ENCODE measurements at regions of chr12 and their contacts with region 1.

Region 1: GRCh38 chr12:120686690-120687577 is at the start of gene MLEC:
- DNase-seq: peak; percentile 99
- H3K4me3 Mint-ChIP-seq: peak within 1 kb of the TSS; percentile 90
- H3K27ac Mint-ChIP-seq: peak within 1 kb of the TSS; percentile 91
- H3K4me1 Mint-ChIP-seq: peaks cover 50% of the 10 kb centered on the region
- H3K27me3 Mint-ChIP-seq: no peaks in the 10 kb centered on the region
- total RNA-seq, gene MLEC: 92.9 to 93.7 TPM

Region 2: DNA sequence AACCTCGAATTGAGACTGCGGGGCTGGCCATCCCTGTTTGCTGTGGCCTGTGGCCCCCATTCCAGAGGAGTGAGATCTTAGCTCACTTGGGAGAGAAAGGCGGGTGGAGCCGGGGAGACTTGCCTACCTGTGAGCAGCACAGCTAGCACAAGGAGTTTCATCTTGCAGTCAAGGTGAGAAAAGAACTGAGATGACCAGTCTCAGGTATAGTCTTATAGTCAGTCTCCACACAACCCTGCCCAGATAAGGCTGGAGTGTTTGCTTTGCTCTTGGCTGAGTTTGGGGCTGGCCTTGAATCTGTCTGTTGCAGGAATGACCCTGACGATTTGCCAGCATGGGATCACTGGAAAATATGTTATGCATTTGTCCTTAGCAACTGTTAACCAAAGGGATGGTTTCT is 359.3 kb before region 1 on chr12 and contains the start of gene PLA2G1B:
- CTCF ChIA-PET with region 1: no interaction called
- POLR2A ChIA-PET with region 1: no interaction called
- intact Hi-C with region 1: loop called (anchors 2 kb)
- DNase-seq: no peak
- H3K4me3 Mint-ChIP-seq: no peak within 1 kb of the TSS
- H3K27ac Mint-ChIP-seq: no peak within 1 kb of the TSS
- H3K4me1 Mint-ChIP-seq: peaks cover 2% of the 10 kb centered on the region
- H3K27me3 Mint-ChIP-seq: peaks cover 2% of the 10 kb centered on the region
- total RNA-seq, gene PLA2G1B: not detected

Region 3: GRCh38 chr12:120361506-120362208 is 325.3 kb before region 1 on chr12:
- CTCF ChIA-PET with region 1: no interaction called
- POLR2A ChIA-PET with region 1: no interaction called
- intact Hi-C with region 1: no loop called
- DNase-seq: peak; percentile 18
- H3K4me3 Mint-ChIP-seq: no peak overlapping the region
- H3K27ac Mint-ChIP-seq: no peak overlapping the region
- H3K4me1 Mint-ChIP-seq: no peaks in the 10 kb centered on the region
- H3K27me3 Mint-ChIP-seq: peaks cover 60% of the 10 kb centered on the region

Region 4: DNA sequence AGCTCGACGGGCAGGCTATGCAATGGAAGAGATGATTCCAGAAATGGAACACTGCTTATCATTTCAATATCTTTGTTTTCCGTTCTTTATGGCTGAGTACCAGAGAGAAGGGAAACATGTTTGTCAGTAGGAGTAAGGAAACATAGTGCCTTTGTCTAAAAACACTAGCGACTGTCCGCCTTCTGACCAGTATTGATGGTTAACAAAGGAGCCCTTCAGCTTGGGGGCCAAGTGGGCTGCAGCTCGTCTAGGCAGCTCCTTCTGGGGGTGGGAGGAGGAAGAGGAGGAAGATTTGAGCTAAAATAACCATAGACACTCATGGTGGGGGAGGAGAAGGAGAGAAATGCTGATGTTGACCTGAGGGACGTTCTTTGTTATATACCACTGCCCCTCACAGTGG is 172.9 kb before region 1 on chr12:
- CTCF ChIA-PET with region 1: no interaction called
- POLR2A ChIA-PET with region 1: no interaction called
- intact Hi-C with region 1: no loop called
- DNase-seq: no peak
- H3K4me3 Mint-ChIP-seq: no peak overlapping the region
- H3K27ac Mint-ChIP-seq: no peak overlapping the region
- H3K4me1 Mint-ChIP-seq: no peaks in the 10 kb centered on the region
- H3K27me3 Mint-ChIP-seq: no peaks in the 10 kb centered on the region

Region 5: GRCh38 chr12:120580787-120581723 is 105.9 kb before region 1 on chr12 and contains the start of gene POP5:
- CTCF ChIA-PET with region 1: interaction called, 11 read pairs
- POLR2A ChIA-PET with region 1: interaction called, 4 read pairs
- intact Hi-C with region 1: loop called (anchors 1 kb)
- DNase-seq: peak; percentile 97
- H3K4me3 Mint-ChIP-seq: peak within 1 kb of the TSS; percentile 96
- H3K27ac Mint-ChIP-seq: peak within 1 kb of the TSS; percentile 86
- H3K4me1 Mint-ChIP-seq: peaks cover 33% of the 10 kb centered on the region
- H3K27me3 Mint-ChIP-seq: no peaks in the 10 kb centered on the region
- total RNA-seq, gene POP5: 54.1 to 55.7 TPM

Region 6: GRCh38 chr12:120610560-120610959 is 76.4 kb before region 1 on chr12:
- CTCF ChIA-PET with region 1: no interaction called
- POLR2A ChIA-PET with region 1: no interaction called
- intact Hi-C with region 1: no loop called
- DNase-seq: no peak
- H3K4me3 Mint-ChIP-seq: no peak overlapping the region
- H3K27ac Mint-ChIP-seq: no peak overlapping the region
- H3K4me1 Mint-ChIP-seq: peaks cover 13% of the 10 kb centered on the region
- H3K27me3 Mint-ChIP-seq: no peaks in the 10 kb centered on the region

Region 7: GRCh38 chr12:120725659-120726509 is 39.0 kb after region 1 on chr12 and contains the start of gene ACADS:
- CTCF ChIA-PET with region 1: no interaction called
- POLR2A ChIA-PET with region 1: no interaction called
- intact Hi-C with region 1: loop called (anchors 5 kb)
- DNase-seq: peak; percentile 91
- H3K4me3 Mint-ChIP-seq: peak within 1 kb of the TSS; percentile 87
- H3K27ac Mint-ChIP-seq: no peak within 1 kb of the TSS
- H3K4me1 Mint-ChIP-seq: peaks cover 17% of the 10 kb centered on the region
- H3K27me3 Mint-ChIP-seq: no peaks in the 10 kb centered on the region
- total RNA-seq, gene ACADS: 15.6 to 16.6 TPM

Region 8: DNA sequence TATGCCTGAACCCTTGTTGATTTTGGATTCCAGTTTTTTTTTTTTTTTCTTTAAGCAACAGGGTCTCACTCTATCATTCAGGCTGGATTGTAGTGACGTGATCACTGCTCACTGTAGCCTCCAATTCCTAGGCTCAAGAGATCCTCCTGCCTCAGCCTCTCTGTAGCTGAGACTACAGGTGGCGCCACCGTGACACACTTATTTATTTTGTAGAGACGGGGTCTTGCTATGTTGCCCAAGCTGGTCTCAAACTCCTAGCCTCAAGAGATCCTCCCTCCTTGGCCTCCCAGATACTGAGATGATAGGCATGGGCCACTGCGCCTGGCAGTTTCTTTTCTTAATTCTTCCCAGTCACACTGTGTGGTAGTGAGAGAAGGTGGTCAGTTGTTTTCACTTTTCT is 63.9 kb after region 1 on chr12:
- CTCF ChIA-PET with region 1: no interaction called
- POLR2A ChIA-PET with region 1: no interaction called
- intact Hi-C with region 1: no loop called
- DNase-seq: peak; percentile 24
- H3K4me3 Mint-ChIP-seq: no peak overlapping the region
- H3K27ac Mint-ChIP-seq: no peak overlapping the region
- H3K4me1 Mint-ChIP-seq: no peaks in the 10 kb centered on the region
- H3K27me3 Mint-ChIP-seq: no peaks in the 10 kb centered on the region

Region 9: GRCh38 chr12:121038861-121039666 is 352.1 kb after region 1 on chr12 and contains the start of gene OASL:
- CTCF ChIA-PET with region 1: no interaction called
- POLR2A ChIA-PET with region 1: interaction called, 5 read pairs
- intact Hi-C with region 1: loop called (anchors 1 kb)
- DNase-seq: peak; percentile 75
- H3K4me3 Mint-ChIP-seq: peak within 1 kb of the TSS; percentile 85
- H3K27ac Mint-ChIP-seq: peak within 1 kb of the TSS; percentile 84
- H3K4me1 Mint-ChIP-seq: peaks cover 50% of the 10 kb centered on the region
- H3K27me3 Mint-ChIP-seq: peaks cover 9% of the 10 kb centered on the region
- total RNA-seq, gene OASL: 21.9 to 26.5 TPM